Activated naive CD8-positive, alpha-beta T cell treated with anti-CD3 and anti-CD28 coated beads, Interleukin-2, amount 10 ng/mL, durations not matched to agents 7 days and 5 days (primary cell): ENCODE measurements at regions of chr20 and their contacts with region 1.

Region 1: GRCh38 chr20:32521780-32522525 is 63.2 kb downstream of the NOL4L start:
- DNase-seq: peak; percentile 78
- ATAC-seq: peak; percentile 62
- H3K4me3 Mint-ChIP-seq: no peak overlapping the region
- H3K27ac Mint-ChIP-seq: peak overlapping the region; percentile 74
- H3K4me1 Mint-ChIP-seq: peaks cover 40% of the 10 kb centered on the region
- H3K27me3 Mint-ChIP-seq: no peaks in the 10 kb centered on the region

Region 2: DNA sequence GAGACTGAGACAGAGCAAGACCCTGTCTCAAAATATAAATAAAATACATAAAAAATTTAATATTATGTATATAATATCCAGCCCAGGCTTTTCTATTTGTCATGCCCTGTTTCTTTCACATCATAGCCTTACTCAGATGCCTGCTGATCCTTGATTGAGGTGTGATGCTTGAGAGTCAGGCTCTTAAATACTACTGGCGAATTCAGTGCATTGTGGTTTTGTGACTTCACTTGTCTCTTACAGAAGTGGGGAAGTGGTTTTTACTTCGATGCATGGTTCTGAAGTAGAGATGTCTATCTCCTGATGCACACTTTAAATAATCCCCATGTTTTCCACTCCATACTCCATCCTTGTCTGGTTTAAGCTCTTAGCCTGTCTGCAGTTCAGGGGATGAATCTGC is 134.7 kb before region 1 on chr20:
- POLR2A ChIA-PET with region 1: no interaction called
- DNase-seq: no peak
- ATAC-seq: peak; percentile 98
- H3K4me3 Mint-ChIP-seq: peak overlapping the region; percentile 58
- H3K27ac Mint-ChIP-seq: peak overlapping the region; percentile 55
- H3K4me1 Mint-ChIP-seq: peaks cover 40% of the 10 kb centered on the region
- H3K27me3 Mint-ChIP-seq: no peaks in the 10 kb centered on the region

Region 3: DNA sequence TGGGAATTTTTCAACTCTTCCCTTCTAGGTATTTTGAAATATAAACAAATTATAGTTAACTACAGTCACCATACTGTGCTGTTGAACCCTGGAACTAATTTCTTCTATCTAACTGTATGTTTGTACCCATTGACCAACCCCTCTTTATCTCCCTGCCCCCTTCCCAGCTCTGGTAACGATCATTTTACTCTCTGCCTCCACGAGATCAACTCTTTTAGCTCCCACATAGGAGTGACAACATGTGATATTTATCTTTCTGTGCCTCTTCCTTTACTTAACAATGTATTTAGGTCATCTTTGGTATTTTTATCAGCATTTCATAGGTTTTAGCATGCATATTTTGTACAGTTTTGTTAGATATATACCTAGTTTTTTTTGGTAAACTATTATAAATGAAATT is 117.9 kb before region 1 on chr20:
- POLR2A ChIA-PET with region 1: no interaction called
- DNase-seq: no peak
- ATAC-seq: no peak
- H3K4me3 Mint-ChIP-seq: no peak overlapping the region
- H3K27ac Mint-ChIP-seq: no peak overlapping the region
- H3K4me1 Mint-ChIP-seq: peaks cover 28% of the 10 kb centered on the region
- H3K27me3 Mint-ChIP-seq: no peaks in the 10 kb centered on the region

Region 4: DNA sequence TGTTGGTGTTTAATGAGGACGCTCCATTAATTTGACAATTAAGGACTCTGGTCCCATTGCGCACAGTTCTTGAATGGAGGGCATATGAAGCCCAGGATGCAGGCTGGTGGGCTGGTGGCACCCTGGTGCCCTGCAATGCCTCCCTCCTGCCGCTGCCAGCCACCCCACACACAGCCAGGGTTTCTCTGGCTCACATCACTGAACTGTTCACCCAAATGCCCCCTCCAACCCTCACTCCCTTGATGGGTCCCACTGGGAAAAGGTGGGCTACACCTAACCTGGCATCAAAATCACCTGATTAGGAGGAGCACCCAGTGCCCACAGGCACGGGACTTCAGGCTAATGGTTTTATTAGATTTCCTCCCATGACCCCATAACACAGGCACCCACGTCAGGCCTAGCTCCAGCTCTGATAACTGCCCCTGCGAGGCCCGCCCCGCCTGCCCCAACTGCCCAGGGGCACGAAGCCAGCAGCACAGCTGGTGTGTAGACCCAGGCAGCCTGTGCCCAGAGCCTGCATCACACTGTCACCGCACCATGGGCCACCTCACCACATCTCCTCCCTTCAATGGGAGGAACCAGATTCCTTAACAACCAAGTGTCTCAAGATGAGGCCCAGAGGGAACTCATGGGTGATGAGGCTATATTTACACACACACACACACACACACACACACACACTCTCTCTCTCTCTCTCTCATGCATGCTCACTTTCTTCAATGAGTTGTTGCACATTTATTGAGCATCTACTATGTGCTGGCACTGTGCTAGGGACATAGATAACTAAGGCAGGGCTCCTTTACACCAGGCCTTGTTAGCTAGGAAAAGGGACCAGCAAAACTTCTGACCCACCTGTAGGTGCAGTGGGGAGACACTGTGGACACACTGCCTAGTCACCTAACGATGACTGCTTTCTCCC is 44.1 kb before region 1 on chr20:
- POLR2A ChIA-PET with region 1: no interaction called
- DNase-seq: no peak
- ATAC-seq: no peak
- H3K4me3 Mint-ChIP-seq: no peak overlapping the region
- H3K27ac Mint-ChIP-seq: peak overlapping the region; percentile 25
- H3K4me1 Mint-ChIP-seq: peaks cover 15% of the 10 kb centered on the region
- H3K27me3 Mint-ChIP-seq: no peaks in the 10 kb centered on the region

Region 5: GRCh38 chr20:32490942-32491763 is 30.8 kb before region 1 on chr20:
- POLR2A ChIA-PET with region 1: no interaction called
- DNase-seq: no peak
- ATAC-seq: no peak
- H3K4me3 Mint-ChIP-seq: no peak overlapping the region
- H3K27ac Mint-ChIP-seq: no peak overlapping the region
- H3K4me1 Mint-ChIP-seq: peaks cover 11% of the 10 kb centered on the region
- H3K27me3 Mint-ChIP-seq: no peaks in the 10 kb centered on the region

Region 6: GRCh38 chr20:32652739-32653526 is 131.0 kb after region 1 on chr20:
- POLR2A ChIA-PET with region 1: interaction called, 44 read pairs
- DNase-seq: peak; percentile 91
- ATAC-seq: peak; percentile 98
- H3K4me3 Mint-ChIP-seq: peak overlapping the region; percentile 26
- H3K27ac Mint-ChIP-seq: peak overlapping the region; percentile 40
- H3K4me1 Mint-ChIP-seq: peaks cover 6% of the 10 kb centered on the region
- H3K27me3 Mint-ChIP-seq: peaks cover 3% of the 10 kb centered on the region